ENCODE measurements at regions of chrX and their contacts with region 1.

Region 1: DNA sequence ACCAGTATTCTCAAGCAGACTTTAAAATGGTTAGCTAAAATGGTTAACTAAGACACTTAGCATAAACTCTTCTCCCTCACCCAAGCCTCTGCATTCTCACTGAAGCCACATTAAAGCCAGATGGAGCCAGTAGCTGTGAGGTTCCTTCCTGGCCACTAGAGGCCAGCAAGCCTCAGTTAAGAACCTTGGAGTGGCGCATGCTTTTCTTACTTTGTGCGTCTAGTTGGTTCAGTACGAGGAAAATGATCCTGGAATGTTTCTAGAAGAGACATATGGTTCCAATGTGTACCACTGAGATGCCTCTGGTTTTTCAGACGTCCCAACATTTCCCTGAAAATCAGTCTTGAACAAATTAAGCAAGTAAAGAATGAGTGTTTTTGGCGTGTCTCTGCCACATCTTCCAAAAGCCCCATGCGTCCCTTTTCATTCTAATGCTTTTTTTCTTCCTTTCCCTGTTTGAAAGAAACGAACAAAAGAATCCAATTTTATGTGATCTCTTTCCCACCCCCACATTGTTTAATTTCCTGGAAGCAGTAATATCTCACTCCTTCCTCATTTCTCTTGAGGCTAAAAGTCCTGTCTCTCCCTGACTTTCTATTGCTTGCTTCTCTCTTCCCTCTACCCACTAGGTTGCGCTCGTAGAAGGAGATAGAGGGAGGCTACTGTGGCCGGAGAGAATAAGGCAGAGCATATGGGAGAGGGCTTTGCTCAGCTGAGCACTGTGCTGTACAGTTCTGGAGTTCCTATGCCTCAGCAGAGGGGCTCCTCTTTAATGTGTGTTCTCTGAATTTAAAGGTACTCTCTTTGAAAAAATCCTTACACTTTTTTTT is 82.9 kb upstream of the TAB3 start:
- DNase-seq: peak; percentile 10
- ATAC-seq: no peak
- H3K4me3 ChIP-seq: peak overlapping the region in 1 of 5 experiments; percentile 3
- H3K4me3 Mint-ChIP-seq: peak overlapping the region; percentile 83
- H3K27ac ChIP-seq: no peak overlapping the region
- H3K27ac Mint-ChIP-seq: no peak overlapping the region
- H3K4me1 ChIP-seq: no peaks in the 10 kb centered on the region
- H3K4me1 Mint-ChIP-seq: peaks cover 6% of the 10 kb centered on the region
- H3K27me3 ChIP-seq: no peaks in the 10 kb centered on the region
- H3K27me3 Mint-ChIP-seq: peaks cover 5% of the 10 kb centered on the region
- CTCF ChIP-seq: peak; percentile 64

Region 2: GRCh38 chrX:31293409-31293808 is 321.4 kb after region 1 on chrX:
- CTCF ChIA-PET with region 1: no interaction called
- POLR2A ChIA-PET with region 1: no interaction called
- intact Hi-C with region 1: loop called (anchors 5 kb)
- DNase-seq: peak; percentile 46
- ATAC-seq: peak; percentile 72
- H3K4me3 ChIP-seq: no peak overlapping the region
- H3K4me3 Mint-ChIP-seq: no peak overlapping the region
- H3K27ac ChIP-seq: no peak overlapping the region
- H3K27ac Mint-ChIP-seq: no peak overlapping the region
- H3K4me1 ChIP-seq: no peaks in the 10 kb centered on the region
- H3K4me1 Mint-ChIP-seq: no peaks in the 10 kb centered on the region
- H3K27me3 ChIP-seq: no peaks in the 10 kb centered on the region
- H3K27me3 Mint-ChIP-seq: no peaks in the 10 kb centered on the region
- CTCF ChIP-seq: peak; percentile 50

Region 3: DNA sequence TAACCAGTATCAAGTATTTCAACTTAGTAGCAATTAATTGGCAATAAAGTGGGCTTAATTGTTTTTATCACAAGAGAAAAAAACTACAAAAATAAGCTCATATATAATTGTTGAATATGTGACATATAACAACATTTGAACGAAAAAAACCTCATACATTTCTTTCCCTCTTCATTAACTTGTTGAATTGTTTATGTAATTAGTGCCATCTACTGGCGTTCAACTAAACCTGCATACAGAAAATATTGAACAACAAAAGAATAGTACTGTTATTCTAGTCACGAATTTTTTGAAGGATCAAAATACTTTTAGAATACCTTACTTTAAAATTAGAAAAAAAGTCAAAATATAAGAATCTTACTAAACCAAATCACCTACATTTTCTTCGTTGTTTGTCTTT is 686.4 kb after region 1 on chrX:
- CTCF ChIA-PET with region 1: interaction called, 3 read pairs
- POLR2A ChIA-PET with region 1: no interaction called
- intact Hi-C with region 1: loop called (anchors 10 kb)
- DNase-seq: peak; percentile 2
- ATAC-seq: no peak
- H3K4me3 ChIP-seq: no peak overlapping the region
- H3K4me3 Mint-ChIP-seq: no peak overlapping the region
- H3K27ac ChIP-seq: no peak overlapping the region
- H3K27ac Mint-ChIP-seq: no peak overlapping the region
- H3K4me1 ChIP-seq: no peaks in the 10 kb centered on the region
- H3K4me1 Mint-ChIP-seq: no peaks in the 10 kb centered on the region
- H3K27me3 ChIP-seq: no peaks in the 10 kb centered on the region
- H3K27me3 Mint-ChIP-seq: no peaks in the 10 kb centered on the region
- CTCF ChIP-seq: peak; percentile 34

Measured in B cell (primary cell).